ACHN (cell line): ENCODE measurements at regions of chr3 and their contacts with region 1.

Region 1: GRCh38 chr3:192795021-192795420 is 67.7 kb upstream of the FGF12 start:
- DNase-seq: no peak

Region 2: GRCh38 chr3:192566706-192567290 is 228.2 kb before region 1 on chr3:
- in situ Hi-C with region 1: loop called (anchors 25 kb)
- DNase-seq: peak; percentile 60